ENCODE measurements at regions of chr1 and their contacts with region 1.

Region 1: DNA sequence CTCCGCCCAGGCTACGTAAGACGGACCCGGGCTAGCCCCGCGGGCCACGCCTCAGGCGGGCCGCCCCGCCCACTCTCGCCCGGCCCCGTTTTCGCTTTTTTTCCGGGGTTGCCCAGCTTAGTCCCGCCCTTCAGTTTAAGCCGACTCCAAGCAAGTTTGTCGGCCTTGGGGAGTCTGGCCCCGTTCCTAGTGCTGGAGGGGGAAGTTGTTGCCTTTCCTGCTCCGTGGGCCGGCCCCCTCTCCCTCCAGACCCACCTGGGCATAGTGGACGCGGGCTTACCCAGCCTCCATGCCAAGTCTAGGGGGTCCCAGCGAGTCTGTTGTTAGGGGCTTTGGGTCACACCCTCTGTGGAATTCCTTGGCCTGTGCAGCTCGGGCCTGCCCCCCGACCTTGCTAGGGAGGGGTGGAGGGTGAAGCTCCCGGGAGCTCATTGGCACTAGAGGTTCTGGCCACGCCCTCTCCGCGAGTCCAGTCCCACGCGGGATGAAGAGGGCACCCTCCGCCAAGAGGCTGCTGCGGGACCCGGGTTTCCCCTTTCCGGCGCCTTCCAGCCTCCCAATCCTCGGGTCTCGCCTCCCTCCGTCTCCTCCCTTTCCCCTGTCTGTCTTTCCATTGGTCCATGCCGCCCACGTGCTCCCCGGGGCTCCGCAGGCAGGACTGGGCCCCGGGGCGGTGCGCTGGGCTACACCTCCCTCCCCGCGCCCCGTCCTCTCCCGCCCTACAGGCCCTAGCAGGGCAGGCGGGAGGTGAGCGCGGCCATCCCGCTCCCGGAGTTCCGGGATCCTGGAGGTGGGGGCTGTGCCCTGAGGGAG is 3.3 kb downstream of the RUSC1 start:
- DNase-seq: peak; percentile 81
- ATAC-seq: peak; percentile 78
- H3K4me3 Mint-ChIP-seq: peak overlapping the region; percentile 88
- H3K27ac Mint-ChIP-seq: peak overlapping the region; percentile 78
- H3K4me1 Mint-ChIP-seq: peaks cover 38% of the 10 kb centered on the region
- H3K27me3 Mint-ChIP-seq: no peaks in the 10 kb centered on the region
- CTCF ChIP-seq: no peak

Region 2: DNA sequence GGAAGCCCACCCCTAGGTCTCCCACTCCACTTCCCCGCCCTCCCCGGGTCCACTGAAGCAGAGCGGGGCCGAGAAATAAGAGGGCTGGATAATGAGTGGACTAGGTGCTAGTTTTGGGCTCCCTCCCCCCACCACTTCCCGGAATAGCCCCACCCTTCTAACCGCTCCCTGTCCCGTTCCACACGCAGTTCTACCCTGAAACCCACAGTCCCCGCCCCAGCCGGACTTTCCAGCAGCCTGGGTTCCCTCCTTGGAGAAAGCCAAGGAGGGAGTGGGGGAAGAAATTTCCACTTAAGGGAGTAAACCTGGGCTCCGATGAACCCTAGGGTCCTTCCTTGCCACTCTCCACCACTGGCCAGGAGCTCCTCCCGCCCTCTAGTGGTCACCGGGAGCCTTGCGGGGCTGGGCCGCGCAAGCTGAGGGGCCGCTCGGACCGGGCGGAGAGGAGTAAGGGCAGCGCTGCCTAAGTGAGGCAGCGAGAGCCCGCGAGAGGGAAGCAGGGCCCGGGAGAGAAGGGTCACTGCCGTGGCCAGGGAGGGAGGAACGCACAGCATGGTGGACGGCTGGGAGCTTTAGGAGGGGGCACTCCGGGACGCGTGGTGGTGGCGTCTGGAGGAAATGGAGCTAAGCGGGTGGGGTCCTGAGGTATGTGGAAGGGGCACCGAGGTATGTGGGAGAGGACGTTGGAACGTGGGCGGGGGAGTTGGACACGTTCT is 130.6 kb before region 1 on chr1:
- CTCF ChIA-PET with region 1: no interaction called
- POLR2A ChIA-PET with region 1: interaction called, 3 read pairs
- intact Hi-C with region 1: loop called (anchors 5 kb)
- DNase-seq: peak; percentile 81
- ATAC-seq: peak; percentile 73
- H3K4me3 Mint-ChIP-seq: peak overlapping the region; percentile 88
- H3K27ac Mint-ChIP-seq: peak overlapping the region; percentile 84
- H3K4me1 Mint-ChIP-seq: peaks cover 28% of the 10 kb centered on the region
- H3K27me3 Mint-ChIP-seq: no peaks in the 10 kb centered on the region
- CTCF ChIP-seq: peak; percentile 63

Region 3: GRCh38 chr1:155244368-155245162 is 79.4 kb before region 1 on chr1:
- CTCF ChIA-PET with region 1: interaction called, 79 read pairs
- POLR2A ChIA-PET with region 1: interaction called, 20 read pairs
- intact Hi-C with region 1: loop called (anchors 1 kb)
- DNase-seq: peak; percentile 87
- ATAC-seq: peak; percentile 97
- H3K4me3 Mint-ChIP-seq: peak overlapping the region; percentile 85
- H3K27ac Mint-ChIP-seq: peak overlapping the region; percentile 96
- H3K4me1 Mint-ChIP-seq: peaks cover 39% of the 10 kb centered on the region
- H3K27me3 Mint-ChIP-seq: peaks cover 2% of the 10 kb centered on the region
- CTCF ChIP-seq: no peak

Region 4: GRCh38 chr1:155261852-155262673 is 61.9 kb before region 1 on chr1 and contains the start of gene SCAMP3:
- CTCF ChIA-PET with region 1: interaction called, 4 read pairs
- POLR2A ChIA-PET with region 1: interaction called, 11 read pairs
- intact Hi-C with region 1: no loop called
- DNase-seq: peak; percentile 71
- ATAC-seq: peak; percentile 95
- H3K4me3 Mint-ChIP-seq: peak within 1 kb of the TSS; percentile 98
- H3K27ac Mint-ChIP-seq: peak within 1 kb of the TSS; percentile 92
- H3K4me1 Mint-ChIP-seq: peaks cover 33% of the 10 kb centered on the region
- H3K27me3 Mint-ChIP-seq: no peaks in the 10 kb centered on the region
- CTCF ChIP-seq: no peak
- total RNA-seq, gene SCAMP3: 71.8 and 78.6 TPM in 2 replicates

Region 5: GRCh38 chr1:155437405-155437804 is 113.4 kb after region 1 on chr1:
- CTCF ChIA-PET with region 1: no interaction called
- POLR2A ChIA-PET with region 1: no interaction called
- intact Hi-C with region 1: no loop called
- DNase-seq: no peak
- ATAC-seq: no peak
- H3K4me3 Mint-ChIP-seq: no peak overlapping the region
- H3K27ac Mint-ChIP-seq: no peak overlapping the region
- H3K4me1 Mint-ChIP-seq: peaks cover 2% of the 10 kb centered on the region
- H3K27me3 Mint-ChIP-seq: no peaks in the 10 kb centered on the region
- CTCF ChIP-seq: no peak

Region 6: GRCh38 chr1:155472491-155473083 is 148.6 kb after region 1 on chr1:
- CTCF ChIA-PET with region 1: no interaction called
- POLR2A ChIA-PET with region 1: no interaction called
- intact Hi-C with region 1: no loop called
- DNase-seq: no peak
- ATAC-seq: no peak
- H3K4me3 Mint-ChIP-seq: no peak overlapping the region
- H3K27ac Mint-ChIP-seq: peak overlapping the region; percentile 4
- H3K4me1 Mint-ChIP-seq: peaks cover 11% of the 10 kb centered on the region
- H3K27me3 Mint-ChIP-seq: no peaks in the 10 kb centered on the region
- CTCF ChIP-seq: no peak

Region 7: GRCh38 chr1:155504207-155504606 is 180.2 kb after region 1 on chr1:
- CTCF ChIA-PET with region 1: interaction called, 15 read pairs
- POLR2A ChIA-PET with region 1: no interaction called
- intact Hi-C with region 1: loop called (anchors 1 kb)
- DNase-seq: no peak
- ATAC-seq: peak; percentile 62
- H3K4me3 Mint-ChIP-seq: no peak overlapping the region
- H3K27ac Mint-ChIP-seq: peak overlapping the region; percentile 30
- H3K4me1 Mint-ChIP-seq: peaks cover 54% of the 10 kb centered on the region
- H3K27me3 Mint-ChIP-seq: no peaks in the 10 kb centered on the region
- CTCF ChIP-seq: no peak

Region 8: DNA sequence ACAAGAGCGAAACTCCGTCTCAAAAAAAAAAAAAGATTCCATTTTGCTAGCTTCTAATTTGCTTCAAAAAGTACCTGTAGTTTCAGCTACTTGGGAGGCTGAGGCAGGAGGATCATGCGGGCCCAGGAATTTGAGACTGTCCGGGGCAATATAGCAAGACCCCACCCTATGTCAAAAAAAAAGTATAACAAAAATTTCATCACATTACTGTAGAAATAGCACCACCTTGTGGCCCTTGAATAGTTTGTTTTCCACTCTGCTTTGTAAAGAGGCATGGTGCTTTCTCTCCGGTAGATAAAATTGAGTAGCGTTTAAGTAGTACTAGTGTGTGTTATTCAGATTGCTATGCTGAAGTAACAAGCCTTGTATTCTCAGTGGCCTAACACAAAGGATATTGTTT is 267.8 kb after region 1 on chr1:
- CTCF ChIA-PET with region 1: no interaction called
- POLR2A ChIA-PET with region 1: interaction called, 7 read pairs
- intact Hi-C with region 1: loop called (anchors 1 kb)
- DNase-seq: no peak
- ATAC-seq: peak; percentile 58
- H3K4me3 Mint-ChIP-seq: no peak overlapping the region
- H3K27ac Mint-ChIP-seq: no peak overlapping the region
- H3K4me1 Mint-ChIP-seq: peaks cover 3% of the 10 kb centered on the region
- H3K27me3 Mint-ChIP-seq: no peaks in the 10 kb centered on the region
- CTCF ChIP-seq: no peak